Endothelial cell of umbilical vein (primary cell): ENCODE measurements at regions of chr10 and their contacts with region 1.

Region 1: DNA sequence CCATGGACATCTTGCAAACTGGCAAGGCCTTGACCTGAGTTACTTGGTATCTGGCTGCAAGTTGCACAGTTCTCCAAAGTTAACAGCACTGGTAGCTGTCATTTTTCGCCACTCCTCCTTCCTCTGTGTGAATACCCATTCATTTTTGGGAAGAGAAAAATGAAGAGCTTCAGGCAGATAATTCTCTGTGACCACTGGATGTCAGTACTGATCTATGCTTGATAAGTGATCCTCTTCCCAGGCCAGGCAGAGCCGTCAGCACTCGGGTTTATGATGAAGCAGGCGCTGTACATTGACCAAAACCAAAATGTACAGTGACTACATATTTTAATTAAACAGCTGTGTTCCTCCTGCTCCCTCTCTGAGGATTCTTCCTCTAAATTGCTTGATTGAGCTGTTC is 55.9 kb upstream of the PDZD8 start:
- DNase-seq: no peak
- H3K4me3 ChIP-seq: no peak overlapping the region
- H3K27ac ChIP-seq: no peak overlapping the region
- H3K4me1 ChIP-seq: no peaks in the 10 kb centered on the region
- H3K27me3 ChIP-seq: peaks cover 0 to 3% of the 10 kb centered on the region in 2 experiments
- CTCF ChIP-seq: no peak
- POLR2A ChIP-seq: no peak

Region 2: DNA sequence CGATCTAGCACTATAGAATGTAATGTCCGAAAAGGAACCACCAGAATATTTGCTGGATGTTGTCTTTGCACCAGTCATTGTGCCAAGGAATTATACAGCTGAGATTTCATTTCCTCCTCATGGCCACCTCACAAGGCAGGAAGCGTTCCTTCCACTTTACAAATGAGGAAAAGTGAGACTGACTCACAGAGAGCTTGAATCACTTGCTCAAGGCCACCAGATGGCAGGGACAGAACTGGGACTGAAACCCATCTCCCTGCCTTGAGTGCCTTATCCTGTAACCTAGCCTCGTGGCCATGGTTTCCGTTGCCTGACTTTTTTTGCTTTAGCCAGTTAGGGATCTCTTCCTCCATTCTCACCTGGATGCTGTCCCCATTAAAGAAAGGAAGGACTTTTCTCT is 11.2 kb before region 1 on chr10:
- CTCF ChIA-PET with region 1: interaction called, 10 read pairs
- POLR2A ChIA-PET with region 1: no interaction called
- dilution Hi-C with region 1: no loop called
- intact Hi-C with region 1: no loop called
- DNase-seq: peak; percentile 12
- H3K4me3 ChIP-seq: no peak overlapping the region
- H3K27ac ChIP-seq: no peak overlapping the region
- H3K4me1 ChIP-seq: no peaks in the 10 kb centered on the region
- H3K27me3 ChIP-seq: no peaks in the 10 kb centered on the region
- CTCF ChIP-seq: no peak
- POLR2A ChIP-seq: no peak